Activated CD8-positive, alpha-beta T cell treated with anti-CD3 and anti-CD28 coated beads, Interleukin-2, amount 10 ng/mL, durations not matched to agents 7 days and 5 days (primary cell): ENCODE measurements at regions of chr16 and their contacts with region 1.

Region 1: DNA sequence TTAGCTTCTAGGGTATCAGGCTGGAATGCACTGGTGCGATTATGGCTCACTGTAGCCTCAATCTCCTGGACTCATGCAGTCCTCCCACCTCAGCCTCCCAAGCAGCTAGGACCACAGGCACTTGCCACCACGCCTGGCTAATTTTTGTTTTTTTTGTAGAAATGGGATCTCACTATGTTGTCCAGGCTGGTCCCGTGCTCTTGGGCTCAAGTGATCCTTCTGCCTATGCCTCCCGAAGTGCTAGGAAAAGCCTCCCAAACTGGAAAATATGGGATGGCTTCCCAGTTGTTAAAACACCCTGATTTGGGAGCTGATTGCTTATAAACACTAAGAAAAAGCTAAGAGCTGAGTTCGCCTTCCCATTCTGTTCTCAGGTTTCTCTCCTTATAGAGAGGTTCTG is 6.6 kb upstream of the ZNF263 start:
- DNase-seq: no peak
- ATAC-seq: no peak
- H3K4me3 Mint-ChIP-seq: no peak overlapping the region
- H3K27ac Mint-ChIP-seq: no peak overlapping the region
- H3K4me1 Mint-ChIP-seq: peaks cover 6% of the 10 kb centered on the region
- H3K27me3 Mint-ChIP-seq: peaks cover 15% of the 10 kb centered on the region

Region 2: DNA sequence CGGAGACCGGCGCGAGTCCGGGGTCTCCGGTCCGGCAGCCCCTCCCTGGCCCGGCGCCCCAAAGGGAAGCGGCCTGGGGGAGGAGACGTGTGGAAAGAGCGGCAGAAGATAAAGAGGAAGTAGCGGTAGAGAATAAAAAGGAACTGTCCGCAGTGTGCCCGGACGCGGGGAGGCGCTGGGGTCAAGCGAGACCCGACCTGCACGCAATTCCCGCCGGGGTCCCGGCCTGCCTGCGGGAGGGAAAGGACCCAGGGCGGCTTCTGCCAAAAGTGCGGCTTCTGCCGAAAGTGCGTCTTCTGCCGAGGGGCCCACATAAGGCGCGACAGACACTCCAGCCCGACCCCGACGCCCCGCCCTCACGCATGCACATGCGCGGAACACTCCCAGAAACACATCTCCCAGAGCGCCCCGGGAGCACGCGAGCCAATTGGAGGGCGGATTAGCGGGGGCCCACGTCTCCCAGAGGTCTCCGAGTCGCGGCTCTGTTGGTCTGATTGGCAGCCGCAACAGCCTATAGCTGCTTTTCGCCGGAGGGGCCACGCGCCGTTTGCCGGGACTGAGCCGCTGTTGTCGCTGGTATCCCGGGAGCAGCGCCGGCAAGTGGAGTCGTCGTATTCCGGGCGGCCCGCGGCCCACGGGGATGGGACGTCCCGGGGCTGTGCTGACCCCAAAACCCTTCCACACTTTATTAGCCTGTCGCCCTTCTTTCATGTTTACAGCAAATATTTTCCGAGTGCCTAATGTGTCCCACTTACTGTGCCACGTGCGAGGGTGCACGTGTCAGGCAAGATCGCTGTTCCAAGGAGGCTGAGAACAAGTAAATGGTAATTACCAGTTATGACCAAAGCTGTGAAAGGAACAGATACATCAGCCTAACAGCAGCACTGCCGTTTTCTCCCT is 12.3 kb before region 1 on chr16:
- CTCF ChIA-PET with region 1: interaction called, 13 read pairs
- POLR2A ChIA-PET with region 1: interaction called, 22 read pairs
- DNase-seq: peak; percentile 99
- ATAC-seq: peak; percentile 92
- H3K4me3 Mint-ChIP-seq: peak overlapping the region; percentile 81
- H3K27ac Mint-ChIP-seq: peak overlapping the region; percentile 94
- H3K4me1 Mint-ChIP-seq: peaks cover 37% of the 10 kb centered on the region
- H3K27me3 Mint-ChIP-seq: no peaks in the 10 kb centered on the region